Esophagus muscularis mucosa (tissue), 4 donors: ENCODE measurements at regions of chr6 and their contacts with region 1.

Region 1: GRCh38 chr6:3983778-3984177 is 95.2 kb downstream of the FAM217A start:
- DNase-seq: no peak
- H3K4me3 ChIP-seq: no peak overlapping the region
- H3K27ac ChIP-seq: no peak overlapping the region
- H3K4me1 ChIP-seq: peaks cover 0 to 4% (median 0%) of the 10 kb centered on the region in 4 donors
- H3K27me3 ChIP-seq: no peaks in the 10 kb centered on the region
- CTCF ChIP-seq: no peak
- EP300 ChIP-seq: no peak
- POLR2A ChIP-seq: no peak

Region 2: DNA sequence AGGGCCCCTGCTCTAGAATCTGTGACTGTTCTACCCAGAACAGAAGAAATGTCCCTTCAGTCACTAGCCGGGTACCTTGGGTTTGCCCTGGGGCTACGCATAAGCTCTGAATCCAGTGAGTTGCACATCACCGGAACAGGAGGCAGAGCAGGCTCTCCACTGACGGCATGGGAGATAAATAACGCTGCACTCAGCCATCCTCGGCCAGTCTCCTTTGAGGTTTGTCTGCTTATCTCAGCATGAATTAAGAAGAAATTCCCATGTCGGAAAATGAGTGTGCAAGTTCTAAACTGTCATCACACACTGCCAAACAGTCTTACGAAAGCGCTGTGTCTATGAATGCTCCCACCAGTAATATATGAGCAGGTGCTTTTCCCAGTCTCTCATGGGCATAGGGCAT is 43.8 kb before region 1 on chr6:
- intact Hi-C with region 1: loop called (anchors 5 kb)
- DNase-seq: peak; percentile 80
- H3K4me3 ChIP-seq: no peak overlapping the region
- H3K27ac ChIP-seq: no peak overlapping the region
- H3K4me1 ChIP-seq: no peaks in the 10 kb centered on the region
- H3K27me3 ChIP-seq: peaks cover 0 to 4% (median 0%) of the 10 kb centered on the region in 4 donors
- CTCF ChIP-seq: no peak
- EP300 ChIP-seq: no peak
- POLR2A ChIP-seq: no peak

Region 3: DNA sequence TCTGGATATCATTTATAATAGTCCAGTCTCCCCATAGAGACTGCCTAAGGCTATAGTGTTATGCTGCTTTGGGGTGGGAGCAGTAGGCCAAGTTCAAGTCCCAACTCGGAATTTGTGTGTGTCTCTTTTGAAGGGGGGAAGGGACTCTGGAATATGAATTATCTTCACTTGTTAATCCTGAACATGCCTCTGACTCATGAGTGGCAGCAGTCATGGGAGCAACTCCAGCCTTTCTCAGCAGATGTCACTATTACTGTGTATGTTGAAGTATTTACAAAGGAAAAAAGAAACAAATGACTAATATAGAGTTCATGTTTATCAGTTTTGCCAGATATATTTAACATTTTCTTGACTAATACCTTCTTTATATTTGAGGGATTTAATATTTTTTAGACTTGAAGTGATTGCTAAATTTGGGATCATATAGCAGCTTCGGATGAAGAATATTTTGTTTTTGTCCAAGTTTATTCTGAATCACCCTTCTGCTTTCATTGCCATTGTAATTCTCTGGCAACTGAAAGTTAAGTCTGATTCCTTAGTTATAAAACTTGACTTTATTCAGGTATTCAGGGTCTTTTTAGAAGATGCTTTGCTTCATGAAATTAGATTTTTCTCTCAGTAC is 71.8 kb after region 1 on chr6:
- intact Hi-C with region 1: no loop called
- DNase-seq: no peak
- H3K4me3 ChIP-seq: no peak overlapping the region
- H3K27ac ChIP-seq: peak overlapping the region in 1 of 4 donors; percentile 4
- H3K4me1 ChIP-seq: peaks cover 7 to 12% (median 9%) of the 10 kb centered on the region in 4 donors
- H3K27me3 ChIP-seq: no peaks in the 10 kb centered on the region
- CTCF ChIP-seq: peak; percentile 27 to 43 (median 43)
- EP300 ChIP-seq: no peak
- POLR2A ChIP-seq: no peak